Adrenal gland (tissue), 19 donors: ENCODE measurements at regions of chr20 and their contacts with region 1.

Region 1: GRCh38 chr20:2523919-2524708 is 12.3 kb upstream of the TMC2 start:
- DNase-seq: peak; percentile 77 to 92 (median 86)
- H3K4me3 ChIP-seq: peak overlapping the region; percentile 51 to 90 (median 78)
- H3K27ac ChIP-seq: peak overlapping the region in 4 of 5 donors; percentile 72 to 89 (median 86)
- H3K4me1 ChIP-seq: peaks cover 0 to 8% of the 10 kb centered on the region in 2 donors
- H3K27me3 ChIP-seq: no peaks in the 10 kb centered on the region
- CTCF ChIP-seq: peak; percentile 78 to 96 (median 92)
- POLR2A ChIP-seq: peak in 1 of 2 donors; percentile 54

Region 2: DNA sequence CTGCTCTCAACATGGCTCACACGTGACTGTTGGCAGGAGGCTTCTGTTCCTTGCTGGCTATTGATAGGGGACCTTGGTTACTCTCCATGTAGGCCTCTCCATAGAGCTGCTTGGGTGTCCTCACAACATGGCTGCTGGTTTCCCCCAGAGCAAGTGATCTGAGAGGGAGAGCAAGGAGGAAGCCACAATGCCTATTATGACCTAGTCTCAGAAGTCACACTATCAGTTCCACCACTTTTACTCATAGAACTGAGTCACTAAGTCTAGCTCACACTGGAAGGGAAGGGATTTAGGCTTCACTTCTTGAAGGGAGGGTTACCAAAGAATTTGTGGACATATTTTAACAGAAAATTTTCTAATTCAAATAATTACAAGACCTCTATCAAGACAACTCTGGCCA is 119.6 kb after region 1 on chr20:
- intact Hi-C with region 1: loop called in 1 of 2 experiments (anchors 10 kb)
- DNase-seq: no peak
- H3K4me3 ChIP-seq: no peak overlapping the region
- H3K27ac ChIP-seq: no peak overlapping the region
- H3K4me1 ChIP-seq: no peaks in the 10 kb centered on the region
- H3K27me3 ChIP-seq: no peaks in the 10 kb centered on the region
- CTCF ChIP-seq: no peak
- POLR2A ChIP-seq: no peak

Region 3: GRCh38 chr20:2651772-2652723 is 127.9 kb after region 1 on chr20 and contains the start of gene NOP56:
- intact Hi-C with region 1: loop called (anchors 10 kb)
- DNase-seq: peak; percentile 89 to 94 (median 91)
- H3K4me3 ChIP-seq: peak within 1 kb of the TSS; percentile 93 to 98 (median 96)
- H3K27ac ChIP-seq: peak within 1 kb of the TSS; percentile 35 to 94 (median 83)
- H3K4me1 ChIP-seq: peaks cover 17 to 19% of the 10 kb centered on the region in 2 donors
- H3K27me3 ChIP-seq: no peaks in the 10 kb centered on the region
- CTCF ChIP-seq: no peak
- POLR2A ChIP-seq: peak; percentile 65 to 94
- total RNA-seq, gene NOP56: 52.5 to 180 (median 79.6) TPM